Activated T-helper 2 cell treated with anti-CD3 and anti-CD28 coated beads, Interferon-gamma antibody, Interleukin-2, Interleukin-4, amounts not matched to agents 10 μg/mL and 5 μg/mL and 100 μg/mL, durations not matched to agents 14 hours and 24 hours and 36 hours (primary cell): ENCODE measurements at regions of chr14 and their contacts with region 1.

Region 1: DNA sequence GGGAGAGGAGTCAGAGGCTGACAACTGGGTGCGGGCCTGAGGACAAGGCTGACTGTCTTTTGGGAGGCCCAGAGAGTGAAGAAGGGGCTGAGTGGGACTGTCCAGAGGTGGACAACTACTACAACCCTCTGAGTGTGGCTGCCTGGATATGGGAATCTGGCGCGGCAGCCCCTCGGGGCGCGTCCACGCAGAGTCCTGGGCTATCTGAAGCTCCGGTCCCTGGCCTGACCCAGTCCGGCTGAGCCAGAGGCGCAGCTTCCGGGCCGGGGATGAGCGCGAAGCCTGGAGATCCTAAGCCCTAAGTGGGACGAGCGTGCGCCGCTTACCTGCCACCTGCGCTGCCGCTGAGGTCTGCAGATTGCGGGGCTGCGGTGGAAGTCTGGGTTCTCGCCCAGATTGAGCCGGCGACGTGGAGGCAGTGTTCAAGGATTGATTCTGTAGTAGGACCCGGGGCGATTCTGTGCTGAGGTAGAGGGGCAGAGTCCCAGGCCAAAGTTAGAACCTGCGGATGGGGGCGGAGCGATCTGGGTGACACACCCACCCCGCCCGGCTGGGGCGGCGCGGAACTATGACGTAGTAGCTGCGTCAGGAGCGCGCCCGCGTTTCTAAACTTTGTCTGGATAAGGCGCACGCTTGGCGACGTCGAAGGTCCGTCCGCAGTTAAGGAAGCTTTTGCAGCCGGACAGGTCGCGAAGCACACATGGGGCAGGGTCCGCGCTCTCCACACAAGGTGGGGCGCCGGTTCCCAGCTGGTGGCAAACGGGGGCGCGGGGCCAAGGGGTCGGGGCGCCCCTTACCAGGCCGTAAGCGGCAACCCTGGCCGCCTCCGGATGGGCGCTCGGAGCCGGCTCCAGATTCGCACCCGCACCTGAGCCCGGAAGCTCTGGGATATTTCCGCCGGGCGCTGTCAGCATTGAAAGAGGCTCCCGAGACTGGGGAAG is at the starts of genes DHRS1 and NOP9:
- DNase-seq: peak; percentile 89
- H3K4me3 Mint-ChIP-seq: peak within 1 kb of the TSS; percentile 90
- H3K27ac Mint-ChIP-seq: peak within 1 kb of the TSS; percentile 88
- H3K4me1 Mint-ChIP-seq: peaks cover 33% of the 10 kb centered on the region
- H3K27me3 Mint-ChIP-seq: no peaks in the 10 kb centered on the region
- total RNA-seq, gene DHRS1: 9.7 and 10.4 TPM in 2 replicates
- total RNA-seq, gene NOP9: 39.7 and 42.0 TPM in 2 replicates

Region 2: GRCh38 chr14:24241829-24242443 is 57.6 kb before region 1 on chr14:
- intact Hi-C with region 1: loop called (anchors 1 kb)
- DNase-seq: peak; percentile 93
- H3K4me3 Mint-ChIP-seq: peak overlapping the region; percentile 86
- H3K27ac Mint-ChIP-seq: peak overlapping the region; percentile 98
- H3K4me1 Mint-ChIP-seq: peaks cover 46% of the 10 kb centered on the region
- H3K27me3 Mint-ChIP-seq: no peaks in the 10 kb centered on the region